Activated CD4-positive, alpha-beta T cell treated with anti-CD3 and anti-CD28 coated beads for 36 hours (primary cell): ENCODE measurements at regions of chr14 and their contacts with region 1.

Region 1: DNA sequence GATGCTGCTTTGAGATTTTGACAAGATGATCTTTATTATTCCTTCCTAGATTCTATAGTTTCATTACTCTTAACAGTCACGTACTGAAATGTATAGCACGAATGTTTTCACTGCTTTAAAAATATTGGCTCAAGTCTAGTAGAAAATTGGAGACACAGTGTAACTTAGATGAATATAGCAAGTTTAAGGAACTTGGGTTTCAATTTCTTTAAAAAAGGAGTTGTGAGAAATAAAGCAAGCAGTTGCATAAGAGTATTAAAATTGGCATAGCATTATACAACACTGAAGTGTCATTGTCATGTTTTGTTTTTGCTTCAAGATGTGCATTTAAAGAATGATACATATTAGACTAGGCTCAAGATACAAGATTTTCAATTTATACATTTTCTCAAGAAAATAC is 624.8 kb upstream of the NOVA1 start:
- DNase-seq: no peak
- ATAC-seq: no peak
- H3K4me3 Mint-ChIP-seq: no peak overlapping the region
- H3K27ac Mint-ChIP-seq: no peak overlapping the region
- H3K4me1 Mint-ChIP-seq: no peaks in the 10 kb centered on the region
- H3K27me3 Mint-ChIP-seq: no peaks in the 10 kb centered on the region

Region 2: DNA sequence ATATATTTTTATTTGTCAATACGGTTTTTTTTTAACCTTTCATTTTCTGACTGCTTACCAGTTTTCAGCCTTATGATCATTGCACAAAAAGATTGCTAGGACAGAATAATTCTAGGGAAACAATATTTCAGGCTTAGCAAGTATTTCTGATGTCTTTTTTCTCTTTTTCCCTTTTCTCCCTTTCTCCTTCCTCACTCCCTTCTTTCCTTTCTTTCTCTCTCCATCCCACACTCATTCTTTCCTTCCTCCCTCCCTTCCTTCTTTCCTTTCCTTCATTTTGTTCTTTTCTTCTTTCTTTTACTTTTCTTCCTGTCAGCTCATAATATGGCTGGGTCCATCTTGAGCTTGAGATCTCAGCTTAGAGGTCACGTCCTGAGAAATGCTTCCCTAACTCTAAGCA is 23.4 kb before region 1 on chr14:
- CTCF ChIA-PET with region 1: no interaction called
- POLR2A ChIA-PET with region 1: no interaction called
- intact Hi-C with region 1: no loop called
- DNase-seq: no peak
- ATAC-seq: no peak
- H3K4me3 Mint-ChIP-seq: no peak overlapping the region
- H3K27ac Mint-ChIP-seq: no peak overlapping the region
- H3K4me1 Mint-ChIP-seq: no peaks in the 10 kb centered on the region
- H3K27me3 Mint-ChIP-seq: no peaks in the 10 kb centered on the region

Region 3: GRCh38 chr14:27211741-27212140 is 10.9 kb before region 1 on chr14:
- CTCF ChIA-PET with region 1: no interaction called
- POLR2A ChIA-PET with region 1: no interaction called
- intact Hi-C with region 1: no loop called
- DNase-seq: no peak
- ATAC-seq: no peak
- H3K4me3 Mint-ChIP-seq: no peak overlapping the region
- H3K27ac Mint-ChIP-seq: no peak overlapping the region
- H3K4me1 Mint-ChIP-seq: no peaks in the 10 kb centered on the region
- H3K27me3 Mint-ChIP-seq: no peaks in the 10 kb centered on the region

Region 4: DNA sequence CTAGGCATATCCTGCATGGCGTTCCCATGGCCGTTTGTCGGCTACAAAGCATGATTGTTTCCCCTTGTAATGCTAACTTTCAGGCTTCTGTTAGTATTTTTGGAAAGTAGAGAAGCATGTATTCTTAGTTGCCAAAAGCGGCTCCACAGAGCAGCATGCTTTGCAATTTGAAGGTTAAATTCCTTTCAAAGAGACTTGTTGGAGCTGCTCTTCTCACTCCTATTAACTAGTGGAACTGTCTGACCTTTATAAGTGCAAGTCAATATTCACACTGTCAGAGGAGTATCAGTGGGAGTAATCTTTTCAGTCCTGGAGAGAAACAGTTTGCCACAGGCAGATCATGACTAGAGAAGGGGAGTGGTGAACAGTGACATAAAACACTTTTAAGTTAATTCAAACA is 31.3 kb after region 1 on chr14:
- CTCF ChIA-PET with region 1: no interaction called
- POLR2A ChIA-PET with region 1: interaction called, 10 read pairs
- intact Hi-C with region 1: no loop called
- DNase-seq: no peak
- ATAC-seq: no peak
- H3K4me3 Mint-ChIP-seq: no peak overlapping the region
- H3K27ac Mint-ChIP-seq: no peak overlapping the region
- H3K4me1 Mint-ChIP-seq: no peaks in the 10 kb centered on the region
- H3K27me3 Mint-ChIP-seq: no peaks in the 10 kb centered on the region